AG04449 (cell line): ENCODE measurements at regions of chrX and their contacts with region 1.

Region 1: GRCh38 chrX:48493890-48494364 is 14.9 kb upstream of the PORCN start:
- DNase-seq: no peak
- H3K4me3 ChIP-seq: no peak overlapping the region
- CTCF ChIP-seq: peak; percentile 39

Region 2: GRCh38 chrX:48003758-48004457 is 490.0 kb before region 1 on chrX and contains the start of gene ZNF182:
- CTCF ChIA-PET with region 1: no interaction called
- POLR2A ChIA-PET with region 1: no interaction called
- DNase-seq: peak; percentile 14
- H3K4me3 ChIP-seq: peak within 1 kb of the TSS; percentile 68
- CTCF ChIP-seq: no peak

Region 3: GRCh38 chrX:48083212-48083611 is 410.7 kb before region 1 on chrX:
- CTCF ChIA-PET with region 1: interaction called, 84 read pairs
- POLR2A ChIA-PET with region 1: interaction called, 3 read pairs
- DNase-seq: no peak
- H3K4me3 ChIP-seq: no peak overlapping the region
- CTCF ChIP-seq: peak; percentile 40

Region 4: DNA sequence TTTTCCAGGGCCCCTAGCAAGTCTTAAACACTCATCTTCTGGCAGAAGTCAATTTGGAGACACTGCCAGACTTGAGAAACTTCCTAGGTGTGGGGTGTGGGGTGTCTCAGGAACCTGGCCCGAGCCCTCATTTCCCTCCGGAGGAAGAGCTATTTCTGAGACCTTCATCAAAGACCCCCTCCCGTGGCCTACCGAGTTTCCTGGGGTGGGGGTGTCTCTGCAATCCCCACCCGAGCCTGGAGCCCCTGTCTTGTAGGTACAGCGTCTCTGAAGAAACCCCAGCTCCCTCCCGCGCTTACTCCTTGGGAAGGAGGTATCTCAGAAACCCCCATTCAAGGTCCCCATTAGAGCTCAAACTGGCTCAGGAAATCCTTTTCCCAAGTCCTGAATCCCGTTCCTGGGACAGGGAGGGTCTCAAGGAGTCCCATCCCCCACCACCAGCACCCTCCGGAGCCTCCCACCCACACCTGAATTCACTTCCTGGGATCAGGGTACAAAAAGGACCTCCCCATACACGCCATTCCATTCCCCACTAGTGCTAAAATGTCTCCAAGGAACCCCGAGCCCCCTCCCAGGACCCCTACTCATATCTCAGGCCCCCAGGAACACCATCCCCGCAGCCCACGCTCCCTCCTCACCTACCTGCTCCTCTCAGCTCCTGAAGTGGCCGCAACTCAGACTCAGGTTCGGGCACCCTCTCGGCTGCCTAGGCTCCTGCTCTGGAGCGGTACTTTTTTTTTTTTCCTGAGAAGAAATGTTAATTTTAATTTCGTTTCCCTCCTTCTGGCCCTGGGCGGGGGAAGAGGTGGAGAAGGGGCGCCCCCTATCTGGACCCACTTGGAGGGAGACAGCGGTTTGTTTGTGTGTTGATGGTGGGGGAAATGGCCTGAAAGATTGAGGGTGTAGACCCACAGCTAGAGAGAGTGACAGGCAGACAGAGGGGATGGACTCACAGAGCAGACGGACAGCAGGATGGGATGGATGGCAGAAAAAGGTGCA is 24.9 kb before region 1 on chrX:
- CTCF ChIA-PET with region 1: interaction called, 16 read pairs
- POLR2A ChIA-PET with region 1: no interaction called
- DNase-seq: no peak
- H3K4me3 ChIP-seq: 0 out of 2 replicates have a peak overlapping the region, but pooled peaks have one; percentile 3
- CTCF ChIP-seq: no peak

Region 5: GRCh38 chrX:48474127-48474526 is 19.8 kb before region 1 on chrX:
- CTCF ChIA-PET with region 1: interaction called, 16 read pairs
- POLR2A ChIA-PET with region 1: interaction called, 3 read pairs
- DNase-seq: no peak
- H3K4me3 ChIP-seq: no peak overlapping the region
- CTCF ChIP-seq: peak; percentile 37